ENCODE measurements at regions of chrX and their contacts with region 1.

Region 1: DNA sequence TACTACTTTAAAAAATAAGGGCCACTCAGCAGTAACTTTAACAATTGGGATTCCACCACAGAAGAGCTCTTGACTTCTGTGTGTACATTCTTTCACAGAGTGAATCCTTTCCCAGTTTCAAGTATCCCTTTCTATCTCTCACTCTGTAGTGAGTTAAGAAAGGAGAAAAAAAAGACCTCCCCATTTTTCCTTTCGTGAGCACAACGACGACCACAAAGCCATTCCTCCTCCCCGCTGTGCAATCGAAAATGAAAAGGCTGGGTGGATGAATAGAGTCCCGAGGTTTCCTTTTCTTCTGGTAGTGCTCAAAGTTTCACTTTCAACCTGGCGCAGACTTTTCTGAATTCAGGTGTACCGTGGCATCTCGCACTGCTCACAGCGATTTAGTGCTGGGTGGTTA is 58.0 kb downstream of the TAB3 start:
- DNase-seq: no peak
- ATAC-seq: no peak
- H3K4me3 ChIP-seq: no peak overlapping the region
- H3K27ac ChIP-seq: no peak overlapping the region
- H3K4me1 ChIP-seq: peaks cover 35% of the 10 kb centered on the region
- H3K27me3 ChIP-seq: no peaks in the 10 kb centered on the region
- CTCF ChIP-seq: no peak
- EP300 ChIP-seq: no peak
- POLR2A ChIP-seq: no peak
- RAD21 ChIP-seq: no peak

Region 2: DNA sequence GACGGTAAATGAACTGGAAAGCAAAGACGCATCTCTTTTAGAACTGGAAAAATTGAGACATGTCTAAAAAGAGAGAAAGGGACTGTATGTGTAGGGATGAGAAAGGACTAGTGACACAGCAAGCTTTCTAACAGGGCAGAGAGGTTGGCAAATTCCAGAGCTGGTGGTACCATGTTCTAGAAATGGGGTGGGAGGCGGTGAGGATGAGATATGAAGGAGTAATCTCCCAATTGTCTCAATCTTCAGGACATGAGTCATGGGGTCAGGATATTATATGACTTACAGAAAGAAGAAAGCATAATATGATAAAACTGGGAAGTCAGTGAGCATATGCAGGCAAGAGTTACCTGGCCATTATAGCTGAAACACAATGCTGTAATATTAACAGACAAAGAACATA is 43.8 kb after region 1 on chrX:
- CTCF ChIA-PET with region 1: no interaction called
- POLR2A ChIA-PET with region 1: no interaction called
- in situ Hi-C with region 1: no loop called
- intact Hi-C with region 1: loop called (anchors 1 kb)
- DNase-seq: no peak
- ATAC-seq: no peak
- H3K4me3 ChIP-seq: no peak overlapping the region
- H3K27ac ChIP-seq: no peak overlapping the region
- H3K4me1 ChIP-seq: peaks cover 64% of the 10 kb centered on the region
- H3K27me3 ChIP-seq: no peaks in the 10 kb centered on the region
- CTCF ChIP-seq: no peak
- EP300 ChIP-seq: no peak
- POLR2A ChIP-seq: no peak
- RAD21 ChIP-seq: no peak

Measured in HepG2 (cell line).